ENCODE measurements at regions of chr17 and their contacts with region 1.

Region 1: GRCh38 chr17:4004517-4005295 is 40.5 kb upstream of the ATP2A3 start:
- DNase-seq: peak in 5 of 6 donors; percentile 42 to 89 (median 48)
- ATAC-seq: peak; percentile 60 to 88 (median 78)
- H3K4me3 ChIP-seq: no peak overlapping the region
- H3K27ac ChIP-seq: peak overlapping the region in 2 of 4 donors; percentile 74 to 78
- H3K4me1 ChIP-seq: peaks cover 0 to 15% (median 0%) of the 10 kb centered on the region in 3 donors
- H3K27me3 ChIP-seq: no peaks in the 10 kb centered on the region
- CTCF ChIP-seq: peak; percentile 71 to 92 (median 88)

Region 2: DNA sequence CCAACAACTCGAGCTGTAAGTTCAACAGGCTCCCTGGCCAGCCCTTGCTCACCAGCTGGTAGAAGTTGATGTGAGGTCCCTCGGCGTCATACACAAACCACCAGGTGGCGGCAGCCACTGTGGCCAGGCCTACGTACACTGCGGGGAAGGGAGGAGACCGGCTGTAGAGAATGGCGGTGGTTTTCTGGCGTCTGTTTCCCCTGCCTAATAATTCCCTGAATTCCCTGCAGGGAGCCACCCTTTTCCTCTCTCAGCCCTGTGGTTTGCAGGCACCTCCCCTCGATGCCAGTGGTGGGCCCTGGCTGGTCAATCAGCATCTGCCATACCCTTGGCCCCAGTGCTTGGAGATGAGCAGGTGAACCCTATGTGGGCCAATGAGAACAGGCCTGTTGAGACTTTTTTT is 69.6 kb before region 1 on chr17:
- intact Hi-C with region 1: loop called in 2 of 3 experiments (anchors 2 to 10 kb)
- DNase-seq: peak; percentile 55 to 86 (median 72)
- ATAC-seq: peak; percentile 88 to 96 (median 94)
- H3K4me3 ChIP-seq: no peak overlapping the region
- H3K27ac ChIP-seq: no peak overlapping the region
- H3K4me1 ChIP-seq: no peaks in the 10 kb centered on the region
- H3K27me3 ChIP-seq: no peaks in the 10 kb centered on the region
- CTCF ChIP-seq: peak; percentile 21 to 46 (median 36)

Region 3: GRCh38 chr17:4064366-4064765 is 59.7 kb after region 1 on chr17:
- intact Hi-C with region 1: no loop called
- DNase-seq: peak in 3 of 6 donors; percentile 64 to 76 (median 66)
- ATAC-seq: no peak
- H3K4me3 ChIP-seq: no peak overlapping the region
- H3K27ac ChIP-seq: no peak overlapping the region
- H3K4me1 ChIP-seq: peaks cover 18 to 24% (median 19%) of the 10 kb centered on the region in 3 donors
- H3K27me3 ChIP-seq: no peaks in the 10 kb centered on the region
- CTCF ChIP-seq: no peak

Measured in pancreas (tissue), 10 donors.